Right cardiac atrium (tissue), 5 donors: ENCODE measurements at regions of chr1 and their contacts with region 1.

Region 1: GRCh38 chr1:177780096-177780700 is 189.7 kb downstream of the SEC16B start:
- DNase-seq: no peak
- ATAC-seq: peak in 1 of 2 donors; percentile 51
- H3K4me3 ChIP-seq: no peak overlapping the region
- H3K27ac ChIP-seq: no peak overlapping the region
- H3K4me1 ChIP-seq: no peaks in the 10 kb centered on the region
- H3K27me3 ChIP-seq: peaks cover 2% of the 10 kb centered on the region

Region 2: GRCh38 chr1:176903474-176903873 is 876.7 kb before region 1 on chr1:
- intact Hi-C with region 1: loop called in 1 of 4 experiments (anchors 5 kb)
- DNase-seq: no peak
- ATAC-seq: no peak
- H3K4me3 ChIP-seq: no peak overlapping the region
- H3K27ac ChIP-seq: no peak overlapping the region
- H3K4me1 ChIP-seq: peaks cover 1% of the 10 kb centered on the region
- H3K27me3 ChIP-seq: no peaks in the 10 kb centered on the region

Region 3: GRCh38 chr1:177256153-177257075 is 523.8 kb before region 1 on chr1:
- intact Hi-C with region 1: loop called in 1 of 4 experiments (anchors 5 kb)
- DNase-seq: peak; percentile 54 to 79 (median 74)
- ATAC-seq: peak; percentile 75 to 86
- H3K4me3 ChIP-seq: no peak overlapping the region
- H3K27ac ChIP-seq: no peak overlapping the region
- H3K4me1 ChIP-seq: no peaks in the 10 kb centered on the region
- H3K27me3 ChIP-seq: no peaks in the 10 kb centered on the region

Region 4: GRCh38 chr1:177669161-177669560 is 111.0 kb before region 1 on chr1:
- intact Hi-C with region 1: no loop called
- DNase-seq: no peak
- ATAC-seq: no peak
- H3K4me3 ChIP-seq: no peak overlapping the region
- H3K27ac ChIP-seq: no peak overlapping the region
- H3K4me1 ChIP-seq: no peaks in the 10 kb centered on the region
- H3K27me3 ChIP-seq: no peaks in the 10 kb centered on the region

Region 5: GRCh38 chr1:177884479-177885021 is 104.4 kb after region 1 on chr1:
- intact Hi-C with region 1: no loop called
- DNase-seq: no peak
- ATAC-seq: no peak
- H3K4me3 ChIP-seq: no peak overlapping the region
- H3K27ac ChIP-seq: no peak overlapping the region
- H3K4me1 ChIP-seq: no peaks in the 10 kb centered on the region
- H3K27me3 ChIP-seq: no peaks in the 10 kb centered on the region